Tibial artery (tissue), 4 donors: ENCODE measurements at regions of chr1 and their contacts with region 1.

Region 1: DNA sequence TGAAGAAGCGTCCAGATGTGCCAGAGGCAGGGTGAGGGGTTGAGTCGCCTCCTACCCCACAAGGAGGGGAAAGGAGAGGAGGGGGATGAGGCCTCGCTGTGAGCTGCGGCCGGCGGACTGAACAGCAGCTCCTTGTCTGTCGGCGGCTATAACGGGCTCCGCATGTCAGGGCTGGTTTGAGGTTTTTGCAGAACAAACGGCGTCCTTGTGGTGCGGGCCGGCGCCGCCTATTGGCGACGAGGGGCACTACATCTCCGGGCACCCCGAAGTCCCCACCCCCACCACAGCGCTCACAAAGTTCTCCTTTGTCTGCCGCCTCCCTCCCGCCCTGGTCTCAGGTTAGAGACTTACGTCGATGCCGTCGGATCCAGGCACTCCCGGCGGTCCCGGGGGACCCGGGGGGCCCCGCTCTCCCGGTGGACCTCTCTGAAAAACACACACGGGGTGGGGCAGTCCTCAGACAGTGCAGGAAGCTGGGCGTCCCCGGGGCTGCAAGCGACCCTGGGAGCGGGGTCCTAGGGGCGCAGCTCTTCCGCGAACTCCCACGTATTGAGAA is 1.8 kb downstream of the COL9A2 start:
- DNase-seq: peak; percentile 78 to 92
- H3K4me3 ChIP-seq: peak overlapping the region; percentile 47 to 56
- H3K27ac ChIP-seq: peak overlapping the region; percentile 41 to 50
- H3K4me1 ChIP-seq: peaks cover 0 to 29% (median 24%) of the 10 kb centered on the region in 4 donors
- H3K27me3 ChIP-seq: peaks cover 0 to 15% of the 10 kb centered on the region in 2 donors
- CTCF ChIP-seq: peak; percentile 95

Region 2: DNA sequence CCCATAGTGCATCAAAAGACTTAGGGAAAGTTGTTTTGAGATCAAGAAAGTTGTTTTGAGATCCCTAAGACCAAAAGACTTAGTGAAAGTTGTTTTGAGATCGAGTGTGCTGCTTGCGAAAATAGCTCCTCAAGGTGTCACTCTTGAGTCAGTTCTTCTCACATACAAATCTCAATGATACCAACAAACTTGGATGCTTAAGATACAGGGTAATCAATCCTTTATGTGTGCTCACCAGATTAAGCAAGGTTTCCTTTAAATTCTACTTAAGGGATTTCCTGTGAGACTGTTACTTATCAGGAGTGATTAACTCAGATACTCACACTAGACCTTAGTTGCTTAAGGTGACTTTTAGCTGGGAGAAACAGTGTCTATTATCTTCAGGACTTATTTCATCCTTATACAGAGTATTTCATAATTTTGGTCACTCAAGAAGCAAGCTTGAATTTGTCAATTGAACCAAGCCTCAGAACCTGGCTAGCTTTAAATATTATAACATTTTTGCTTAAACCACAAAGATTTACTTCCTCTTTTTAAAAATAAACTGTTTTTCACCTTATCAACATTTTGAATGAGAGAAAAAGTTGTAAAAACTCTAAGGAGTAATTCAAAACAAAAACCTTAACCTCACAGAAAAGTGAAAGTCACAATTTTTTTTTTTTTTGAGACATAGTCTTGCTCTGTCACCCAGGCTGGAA is 162.1 kb before region 1 on chr1:
- intact Hi-C with region 1: loop called (anchors 5 kb)
- DNase-seq: no peak
- H3K4me3 ChIP-seq: no peak overlapping the region
- H3K27ac ChIP-seq: no peak overlapping the region
- H3K4me1 ChIP-seq: no peaks in the 10 kb centered on the region
- H3K27me3 ChIP-seq: peaks cover 0 to 4% of the 10 kb centered on the region in 2 donors
- CTCF ChIP-seq: peak; percentile 68 to 73

Region 3: DNA sequence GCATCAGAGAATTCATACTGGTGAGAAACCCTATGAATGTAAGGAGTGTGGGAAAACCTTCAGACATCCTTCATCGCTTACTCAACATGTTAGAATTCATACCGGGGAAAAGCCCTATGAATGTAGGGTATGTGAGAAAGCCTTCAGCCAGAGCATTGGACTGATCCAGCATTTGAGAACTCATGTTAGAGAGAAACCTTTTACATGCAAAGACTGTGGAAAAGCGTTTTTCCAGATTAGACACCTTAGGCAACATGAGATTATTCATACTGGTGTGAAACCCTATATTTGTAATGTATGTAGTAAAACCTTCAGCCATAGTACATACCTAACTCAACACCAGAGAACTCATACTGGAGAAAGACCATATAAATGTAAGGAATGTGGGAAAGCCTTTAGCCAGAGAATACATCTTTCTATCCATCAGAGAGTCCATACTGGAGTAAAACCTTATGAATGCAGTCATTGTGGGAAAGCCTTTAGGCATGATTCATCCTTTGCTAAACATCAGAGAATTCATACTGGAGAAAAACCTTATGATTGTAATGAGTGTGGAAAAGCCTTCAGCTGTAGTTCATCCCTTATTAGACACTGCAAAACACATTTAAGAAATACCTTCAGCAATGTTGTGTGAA is 147.8 kb after region 1 on chr1:
- intact Hi-C with region 1: no loop called
- DNase-seq: no peak
- H3K4me3 ChIP-seq: no peak overlapping the region
- H3K27ac ChIP-seq: no peak overlapping the region
- H3K4me1 ChIP-seq: no peaks in the 10 kb centered on the region
- H3K27me3 ChIP-seq: no peaks in the 10 kb centered on the region
- CTCF ChIP-seq: no peak